ENCODE measurements at regions of chr9 and their contacts with region 1.

Region 1: DNA sequence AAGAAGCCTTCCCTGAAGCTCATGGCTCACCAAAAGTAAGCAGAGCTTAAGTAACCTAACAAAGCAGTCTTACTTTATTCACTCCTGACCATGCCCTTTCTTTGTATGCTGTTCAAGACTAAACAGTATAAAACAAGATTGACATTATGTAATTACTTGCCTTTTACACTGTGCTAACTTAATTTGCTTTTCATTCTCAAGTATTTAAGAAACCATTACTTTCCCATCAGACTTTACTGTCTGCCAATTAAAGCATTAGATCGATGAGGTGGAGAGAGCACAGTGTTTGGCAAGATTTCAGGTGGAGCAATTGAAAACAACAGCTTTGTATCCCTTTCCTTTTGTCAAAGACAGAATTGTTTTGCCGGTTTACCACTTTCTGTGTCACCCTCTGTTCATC is 98.2 kb downstream of the RORB start:
- DNase-seq: no peak
- ATAC-seq: no peak

Region 2: GRCh38 chr9:74543145-74543544 is 52.1 kb before region 1 on chr9:
- intact Hi-C with region 1: loop called (anchors 2 kb)
- DNase-seq: no peak
- ATAC-seq: no peak

Measured in sciatic nerve (tissue), 2 donors.